Heart right ventricle (tissue), 16 donors: ENCODE measurements at regions of chr3 and their contacts with region 1.

Region 1: DNA sequence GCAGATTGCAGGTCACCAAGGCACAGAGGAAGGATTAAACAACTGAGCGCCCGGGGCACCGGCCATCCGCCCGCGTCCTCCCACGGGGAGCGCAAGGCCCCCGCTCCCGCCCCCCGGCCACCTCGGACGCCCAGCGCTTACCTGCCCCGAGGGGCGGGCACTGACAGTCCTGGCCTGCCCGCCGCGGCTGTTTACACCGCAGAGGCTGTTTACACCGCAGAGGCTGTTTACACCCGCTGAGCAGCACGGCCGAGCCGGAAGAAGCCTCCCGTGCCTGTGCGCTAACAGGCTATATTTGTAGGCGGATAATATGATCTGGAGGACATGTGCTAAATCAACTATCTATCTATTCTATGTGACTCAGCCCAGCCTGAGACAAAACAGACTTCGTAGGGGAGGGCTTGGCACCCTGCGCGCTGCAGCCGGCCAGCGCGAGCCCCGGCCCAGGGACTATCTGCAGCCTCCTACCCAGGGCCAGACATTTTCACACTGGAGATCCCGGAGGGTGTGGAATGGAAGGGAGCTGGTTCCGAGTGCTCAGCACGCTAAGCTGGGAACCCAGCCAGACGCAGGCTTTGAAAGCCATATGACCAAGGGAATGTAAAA is at the start of gene LRRC2:
- DNase-seq: peak; percentile 66 to 73
- ATAC-seq: peak; percentile 68 to 86 (median 76)
- H3K4me3 ChIP-seq: peak within 1 kb of the TSS; percentile 43 to 77 (median 66)
- H3K27ac ChIP-seq: peak within 1 kb of the TSS; percentile 84 to 98 (median 92)
- H3K4me1 ChIP-seq: peaks cover 0 to 40% (median 14%) of the 10 kb centered on the region in 9 donors
- H3K27me3 ChIP-seq: peaks cover 0 to 27% (median 0%) of the 10 kb centered on the region in 7 donors
- CTCF ChIP-seq: no peak
- total RNA-seq, gene LRRC2: 103 to 163 (median 128) TPM

Region 2: DNA sequence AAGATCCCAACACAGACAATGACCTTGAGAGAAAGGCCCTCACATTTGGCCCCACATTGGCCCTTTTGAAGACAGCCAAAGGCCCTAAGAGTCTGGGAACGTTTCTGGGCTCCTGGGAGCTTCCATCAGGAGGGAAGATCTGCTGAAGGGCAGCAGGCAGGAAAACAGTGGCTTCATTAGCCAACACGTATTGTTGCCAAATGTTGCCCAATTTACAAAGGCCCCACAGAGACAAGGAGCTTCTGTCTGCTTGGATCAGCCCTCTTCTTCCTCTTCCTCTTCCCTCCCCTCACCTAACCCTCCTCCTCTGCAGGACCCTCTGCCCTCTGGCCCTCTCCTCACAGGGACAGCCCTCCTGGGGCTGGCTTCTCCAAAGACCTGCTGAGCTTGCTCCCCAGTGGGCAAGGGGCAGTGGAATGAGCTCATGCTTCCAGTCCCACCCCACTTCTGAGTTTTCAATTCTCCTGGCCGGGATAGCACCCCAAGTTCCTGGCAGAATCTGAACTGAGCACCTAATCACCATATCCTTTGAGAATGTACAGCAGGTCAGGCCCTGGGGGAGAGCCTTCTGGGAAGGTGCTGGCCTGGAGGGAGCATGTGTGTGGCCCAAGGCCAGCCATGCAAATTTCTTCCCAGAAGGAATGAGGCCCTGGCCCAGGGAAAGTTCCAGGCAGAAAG is 96.3 kb before region 1 on chr3:
- intact Hi-C with region 1: no loop called
- DNase-seq: no peak
- ATAC-seq: peak in 2 of 8 donors; percentile 33 to 50
- H3K4me3 ChIP-seq: no peak overlapping the region
- H3K27ac ChIP-seq: peak overlapping the region in 4 of 10 donors; percentile 22 to 74 (median 52)
- H3K4me1 ChIP-seq: peaks cover 0 to 37% (median 27%) of the 10 kb centered on the region in 9 donors
- H3K27me3 ChIP-seq: peaks cover 0 to 11% (median under 1%) of the 10 kb centered on the region in 7 donors
- CTCF ChIP-seq: no peak

Region 3: GRCh38 chr3:46695177-46695961 is 129.2 kb after region 1 on chr3:
- intact Hi-C with region 1: loop called in 1 of 10 experiments (anchors 10 kb)
- DNase-seq: peak; percentile 65 to 77
- ATAC-seq: peak; percentile 5 to 65 (median 44)
- H3K4me3 ChIP-seq: no peak overlapping the region
- H3K27ac ChIP-seq: peak overlapping the region; percentile 76 to 99 (median 92)
- H3K4me1 ChIP-seq: peaks cover 66 to 89% (median 79%) of the 10 kb centered on the region in 9 donors
- H3K27me3 ChIP-seq: peaks cover 0 to 11% (median 0%) of the 10 kb centered on the region in 7 donors
- CTCF ChIP-seq: peak in 6 of 9 donors; percentile 17 to 30 (median 24)